Activated T-helper 1 cell treated with anti-CD3 and anti-CD28 coated beads, Interleukin-12 subunit alpha, Interleukin-12 subunit beta, Interleukin-2, Interleukin-4 antibody, amounts not matched to agents 30 ng/mL and 10 ng/mL and 1 ng/mL, durations not matched to agents 14 hours and 24 hours and 36 hours (primary cell): ENCODE measurements at regions of chr12 and their contacts with region 1.

Region 1: DNA sequence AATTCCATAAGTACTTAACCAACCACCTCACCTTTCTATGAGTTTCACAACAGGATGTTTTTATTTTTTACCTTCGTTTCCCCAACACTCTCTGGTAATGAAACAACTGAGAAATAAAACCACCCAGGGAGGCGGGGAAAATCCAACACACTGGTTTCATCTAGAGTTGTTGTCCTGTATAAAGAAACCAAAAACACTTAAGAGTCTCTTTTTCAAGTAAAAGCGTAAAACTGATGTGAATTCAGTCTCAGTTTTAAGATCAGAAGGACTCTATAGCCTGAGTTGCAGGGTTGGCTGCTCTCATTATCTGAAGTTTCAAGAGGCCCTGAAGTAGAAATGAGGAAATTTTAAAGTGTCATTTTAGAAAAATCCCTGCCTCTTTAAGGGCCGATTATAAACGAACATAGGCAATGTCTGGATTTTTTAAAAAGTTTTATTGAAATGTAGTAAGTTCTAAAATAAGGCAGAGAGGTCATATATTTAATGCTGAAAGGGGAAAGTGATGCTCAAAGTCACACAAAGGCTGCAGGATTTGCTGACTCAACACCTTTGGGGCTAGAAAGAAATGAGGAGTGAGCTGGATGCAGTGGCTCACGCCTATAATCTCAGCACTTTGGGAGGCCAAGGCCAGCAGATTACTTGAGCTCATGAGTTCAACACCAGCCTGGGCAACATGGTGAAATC is 27.2 kb downstream of the HIGD1C start:
- DNase-seq: peak; percentile 67
- H3K4me3 Mint-ChIP-seq: peak overlapping the region; percentile 71
- H3K27ac Mint-ChIP-seq: peak overlapping the region; percentile 96
- H3K4me1 Mint-ChIP-seq: peaks cover 38% of the 10 kb centered on the region
- H3K27me3 Mint-ChIP-seq: no peaks in the 10 kb centered on the region

Region 2: DNA sequence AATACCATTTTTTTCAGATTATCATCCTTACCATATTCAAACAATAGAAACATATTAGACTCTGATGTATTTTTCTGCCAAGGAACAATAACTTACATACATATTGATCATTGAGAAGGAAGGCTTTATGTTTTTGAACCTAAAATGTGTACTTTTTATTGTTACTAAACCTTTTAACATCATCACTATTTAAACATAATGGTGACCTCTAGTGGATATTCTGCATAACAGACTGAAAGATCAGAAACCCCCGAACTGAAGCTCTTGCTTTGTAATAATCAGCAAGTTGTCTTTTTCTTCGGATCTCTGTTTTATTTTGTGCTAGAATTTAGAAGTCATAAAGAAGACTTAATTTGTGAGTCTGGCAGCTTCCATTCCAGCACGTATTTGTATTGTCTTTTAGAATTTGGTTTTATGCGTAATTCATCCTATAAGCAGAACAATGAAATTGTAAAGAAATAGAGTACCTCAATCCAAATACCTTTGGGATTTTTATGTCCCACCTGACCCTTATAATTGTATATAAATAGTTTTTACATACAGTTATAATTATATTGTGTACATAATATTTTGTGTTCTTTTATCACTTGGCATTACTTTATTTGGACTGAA is 341.5 kb before region 1 on chr12:
- intact Hi-C with region 1: no loop called
- DNase-seq: no peak
- H3K4me3 Mint-ChIP-seq: no peak overlapping the region
- H3K27ac Mint-ChIP-seq: peak overlapping the region; percentile 31
- H3K4me1 Mint-ChIP-seq: peaks cover 44% of the 10 kb centered on the region
- H3K27me3 Mint-ChIP-seq: no peaks in the 10 kb centered on the region

Region 3: DNA sequence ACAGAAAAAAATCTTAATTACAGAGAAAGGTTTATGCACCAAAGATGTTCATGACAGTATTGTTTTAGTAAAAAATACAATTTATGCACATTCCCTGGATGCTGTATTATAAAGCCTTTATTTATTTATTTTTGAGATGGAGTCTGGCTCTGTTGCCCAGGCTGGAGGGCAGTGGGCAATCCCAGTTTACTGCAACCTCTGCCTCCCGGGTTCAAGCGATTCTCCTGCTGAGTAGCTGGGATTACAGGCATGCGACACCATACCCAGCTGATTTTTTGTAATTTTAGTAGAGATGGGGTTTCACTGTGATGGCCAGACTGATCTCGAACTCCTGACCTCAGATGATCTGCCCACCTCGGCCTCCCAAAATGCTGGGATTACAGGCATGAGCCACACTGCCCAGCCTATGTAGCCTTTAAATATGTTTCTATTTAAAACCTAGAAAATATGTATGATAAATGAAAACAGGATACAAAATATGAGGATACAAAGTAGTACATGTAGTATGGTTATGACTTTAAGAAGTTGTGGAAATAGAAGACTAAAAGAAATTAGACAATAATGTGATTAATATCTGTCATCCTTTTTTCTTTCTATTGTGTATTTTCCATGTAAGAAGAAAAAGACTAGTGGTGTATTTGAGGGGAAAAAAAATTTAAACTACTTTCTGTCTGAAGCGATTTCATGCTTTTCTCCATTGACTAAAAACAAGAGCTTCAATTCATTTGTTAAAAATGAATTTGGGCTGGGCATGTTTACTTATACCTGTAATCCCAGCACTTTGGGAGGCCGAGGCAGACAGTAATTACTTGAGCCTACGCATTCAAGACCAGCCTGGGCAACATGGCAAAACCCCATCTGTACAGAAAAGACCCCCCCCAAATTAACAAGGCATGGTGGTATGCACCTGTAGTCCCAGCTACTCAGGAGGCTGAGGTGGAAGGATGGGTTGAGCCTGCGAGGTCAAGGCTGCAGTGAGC is 202.5 kb before region 1 on chr12:
- intact Hi-C with region 1: loop called (anchors 1 kb)
- DNase-seq: no peak
- H3K4me3 Mint-ChIP-seq: no peak overlapping the region
- H3K27ac Mint-ChIP-seq: peak overlapping the region; percentile 70
- H3K4me1 Mint-ChIP-seq: peaks cover 6% of the 10 kb centered on the region
- H3K27me3 Mint-ChIP-seq: no peaks in the 10 kb centered on the region

Region 4: DNA sequence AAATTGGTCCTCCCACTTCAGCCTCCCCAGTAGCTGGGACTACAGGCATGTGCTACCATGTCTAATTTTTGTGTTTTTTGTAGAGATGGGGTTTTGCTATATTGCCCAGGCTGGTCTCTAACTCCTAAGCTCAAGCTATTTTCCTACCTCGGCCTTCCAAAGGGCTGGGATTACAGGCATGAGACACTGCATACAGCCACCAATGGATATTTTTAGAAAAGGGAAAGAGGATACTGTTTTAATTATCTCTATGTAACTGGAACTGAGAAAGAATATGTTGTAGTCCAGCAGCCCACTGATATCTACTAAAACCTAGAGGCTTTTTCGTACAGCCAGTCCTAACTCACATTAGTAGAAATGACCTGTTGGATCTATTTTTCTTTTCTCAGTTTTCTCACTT is 130.5 kb before region 1 on chr12:
- intact Hi-C with region 1: no loop called
- DNase-seq: no peak
- H3K4me3 Mint-ChIP-seq: no peak overlapping the region
- H3K27ac Mint-ChIP-seq: no peak overlapping the region
- H3K4me1 Mint-ChIP-seq: no peaks in the 10 kb centered on the region
- H3K27me3 Mint-ChIP-seq: peaks cover 12% of the 10 kb centered on the region

Region 5: DNA sequence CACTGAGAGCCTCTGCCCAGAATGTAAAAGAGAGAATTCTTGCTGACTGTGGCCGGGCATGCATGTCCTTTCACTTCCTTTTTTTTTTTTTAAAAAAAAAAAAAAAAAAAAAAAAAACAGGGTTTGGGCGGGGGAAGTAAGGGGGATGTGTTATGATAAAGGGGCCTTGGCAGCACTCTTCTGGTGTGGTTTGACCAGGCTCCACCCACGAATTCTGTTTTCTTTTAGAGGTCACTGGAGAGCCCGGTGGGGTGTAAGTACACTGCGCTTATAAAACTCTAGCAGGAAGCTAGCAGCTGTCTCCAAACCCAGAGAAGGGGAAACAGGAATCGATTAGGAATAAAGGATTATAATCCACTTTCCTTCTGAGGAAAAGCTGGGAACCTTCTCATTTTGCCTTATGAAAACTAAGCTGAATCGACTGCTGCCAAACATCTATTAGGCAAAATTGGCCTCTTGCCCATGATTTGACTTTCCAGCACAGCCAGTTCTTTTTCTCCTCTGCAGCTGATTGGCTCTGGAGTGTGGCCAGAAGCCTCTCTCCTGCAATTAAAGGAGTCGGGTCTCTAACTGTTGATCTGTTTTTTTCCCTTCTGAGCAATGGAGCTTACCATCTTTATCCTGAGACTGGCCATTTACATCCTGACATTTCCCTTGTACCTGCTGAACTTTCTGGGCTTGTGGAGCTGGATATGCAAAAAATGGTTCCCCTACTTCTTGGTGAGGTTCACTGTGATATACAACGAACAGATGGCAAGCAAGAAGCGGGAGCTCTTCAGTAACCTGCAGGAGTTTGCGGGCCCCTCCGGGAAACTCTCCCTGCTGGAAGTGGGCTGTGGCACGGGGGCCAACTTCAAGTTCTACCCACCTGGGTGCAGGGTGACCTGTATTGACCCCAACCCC is 54.8 kb before region 1 on chr12:
- intact Hi-C with region 1: loop called (anchors 2 kb)
- DNase-seq: peak; percentile 3
- H3K4me3 Mint-ChIP-seq: peak overlapping the region; percentile 70
- H3K27ac Mint-ChIP-seq: peak overlapping the region; percentile 64
- H3K4me1 Mint-ChIP-seq: peaks cover 27% of the 10 kb centered on the region
- H3K27me3 Mint-ChIP-seq: no peaks in the 10 kb centered on the region

Region 6: DNA sequence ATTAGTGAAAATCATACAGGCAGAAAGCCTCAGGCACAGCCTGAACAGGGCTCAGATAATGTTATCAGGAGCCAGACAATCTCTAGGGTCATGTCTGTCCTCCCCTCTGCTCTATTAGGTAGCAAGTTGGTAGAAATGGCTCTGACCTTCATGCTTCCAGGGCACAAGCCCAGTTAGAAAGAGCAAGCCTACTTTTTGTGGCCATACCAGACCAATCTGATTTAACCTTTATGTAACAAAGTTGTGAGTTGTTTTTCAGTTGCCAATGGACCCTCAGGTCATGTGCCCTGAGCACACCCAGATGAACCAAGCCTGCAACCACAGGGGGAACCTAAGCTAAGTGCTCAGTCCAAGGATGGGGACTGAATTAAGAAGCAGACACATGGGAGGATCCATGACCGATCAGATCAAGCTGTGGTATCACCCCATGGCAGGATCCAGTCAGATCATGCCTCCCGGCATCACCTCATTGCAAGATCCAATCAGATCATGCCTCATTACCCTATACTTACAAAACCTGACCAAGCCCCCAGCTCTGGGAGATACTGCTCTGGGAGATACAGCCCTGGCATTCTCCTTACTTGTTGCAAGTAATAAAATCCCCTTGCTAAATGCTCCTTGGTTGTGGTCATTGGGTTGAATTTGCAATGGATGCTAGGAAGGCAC is 45.9 kb before region 1 on chr12:
- intact Hi-C with region 1: loop called (anchors 1 kb)
- DNase-seq: no peak
- H3K4me3 Mint-ChIP-seq: no peak overlapping the region
- H3K27ac Mint-ChIP-seq: no peak overlapping the region
- H3K4me1 Mint-ChIP-seq: peaks cover 26% of the 10 kb centered on the region
- H3K27me3 Mint-ChIP-seq: no peaks in the 10 kb centered on the region

Region 7: DNA sequence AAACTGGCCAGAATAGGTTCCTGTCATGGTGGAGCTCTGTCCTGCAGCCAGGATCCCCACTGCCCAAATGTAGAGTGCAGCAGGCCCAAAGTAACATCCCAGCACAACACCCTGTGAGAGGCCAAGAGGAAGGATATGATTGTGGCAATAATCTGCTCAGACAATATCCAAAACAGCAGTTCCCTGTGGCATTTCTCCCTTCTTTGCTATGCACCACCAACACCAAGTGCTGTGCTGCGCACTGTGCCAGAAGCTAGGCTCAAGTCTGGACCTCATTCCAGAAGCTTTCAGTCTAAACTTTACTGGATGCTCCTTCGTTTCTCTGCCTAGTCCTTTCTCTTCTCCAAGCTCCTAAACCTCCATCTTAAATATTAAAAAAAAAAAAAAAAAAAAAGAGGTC is 13.3 kb after region 1 on chr12:
- intact Hi-C with region 1: no loop called
- DNase-seq: no peak
- H3K4me3 Mint-ChIP-seq: no peak overlapping the region
- H3K27ac Mint-ChIP-seq: no peak overlapping the region
- H3K4me1 Mint-ChIP-seq: peaks cover 13% of the 10 kb centered on the region
- H3K27me3 Mint-ChIP-seq: no peaks in the 10 kb centered on the region

Region 8: DNA sequence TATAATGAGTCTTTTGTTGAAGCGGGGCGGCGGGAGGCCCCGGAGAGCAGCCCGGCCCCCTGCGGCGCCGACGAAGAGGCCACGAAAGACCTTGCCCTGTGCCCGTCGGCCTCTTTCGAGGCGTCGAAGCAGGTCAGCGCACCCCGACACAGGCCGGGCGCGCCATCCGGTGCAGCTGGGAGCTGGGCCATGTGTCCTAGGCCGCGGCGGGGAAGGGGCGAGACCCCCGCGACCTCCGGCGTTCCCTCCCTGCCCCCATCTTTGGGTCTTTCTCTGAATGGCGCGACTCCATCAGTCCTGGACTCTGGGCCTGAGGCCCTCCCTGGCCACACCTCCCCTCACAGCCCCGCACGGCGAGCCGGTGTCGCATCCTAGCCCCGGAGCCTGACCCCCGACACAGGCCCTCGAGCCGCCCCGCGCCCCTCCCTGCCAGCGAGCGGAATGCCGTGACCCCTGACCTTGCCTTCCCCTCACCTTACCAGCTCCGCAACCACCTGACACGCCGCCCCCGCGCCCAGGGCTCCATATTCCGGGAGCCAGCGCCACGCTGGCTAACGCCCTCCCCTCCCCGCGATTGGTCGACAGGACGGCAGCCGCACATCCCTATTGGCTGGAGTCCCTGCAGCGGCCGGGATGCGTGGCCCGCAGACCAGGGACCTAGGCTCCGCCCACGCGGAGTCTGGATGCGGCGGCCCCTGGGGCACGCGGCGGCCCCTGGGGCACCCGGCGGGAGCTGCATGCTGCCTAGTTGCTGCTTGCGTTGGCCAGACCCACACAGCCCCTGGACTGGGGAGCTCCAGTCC is 46.5 kb after region 1 on chr12 and contains the start of gene SLC11A2:
- intact Hi-C with region 1: loop called (anchors 1 kb)
- DNase-seq: peak; percentile 91
- H3K4me3 Mint-ChIP-seq: peak within 1 kb of the TSS; percentile 92
- H3K27ac Mint-ChIP-seq: peak within 1 kb of the TSS; percentile 98
- H3K4me1 Mint-ChIP-seq: peaks cover 55% of the 10 kb centered on the region
- H3K27me3 Mint-ChIP-seq: peaks cover 18% of the 10 kb centered on the region
- total RNA-seq, gene SLC11A2: 56.9 and 63.9 TPM in 2 replicates